CD8-positive, alpha-beta T cell (primary cell): ENCODE measurements at regions of chr11 and their contacts with region 1.

Region 1: DNA sequence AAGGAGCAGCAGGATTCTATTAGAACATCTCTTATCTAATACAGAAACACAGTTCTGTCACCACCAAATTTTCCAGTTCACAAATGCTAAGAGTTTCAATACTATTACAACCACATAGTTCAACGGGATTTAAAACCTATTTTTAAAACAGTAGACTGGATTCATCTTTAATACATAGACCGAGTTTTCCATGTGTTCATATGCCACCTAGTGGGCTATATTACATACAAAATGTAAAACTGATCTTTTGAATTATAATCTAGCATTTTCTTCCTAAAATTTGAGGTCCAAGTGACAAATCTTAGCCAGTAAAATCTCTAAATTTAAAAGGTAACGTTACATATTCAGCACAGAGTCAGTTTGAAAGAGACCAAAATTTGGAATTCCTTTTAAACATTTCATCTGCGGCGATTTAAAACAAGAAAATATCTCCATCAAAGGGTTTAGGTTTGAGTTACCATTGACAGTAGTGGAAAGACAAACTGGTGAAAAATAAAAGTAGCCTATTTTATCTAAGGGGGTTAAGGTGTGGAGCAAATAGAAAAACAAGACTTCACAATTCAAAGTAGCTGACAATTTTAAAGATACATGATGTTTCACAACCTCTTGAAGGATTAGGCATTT is 269.3 kb upstream of the MPPED2 start:
- DNase-seq: no peak
- ATAC-seq: no peak
- H3K4me3 ChIP-seq: no peak overlapping the region
- H3K4me3 Mint-ChIP-seq: no peak overlapping the region
- H3K27ac ChIP-seq: no peak overlapping the region
- H3K27ac Mint-ChIP-seq: no peak overlapping the region
- H3K4me1 ChIP-seq: no peaks in the 10 kb centered on the region
- H3K4me1 Mint-ChIP-seq: no peaks in the 10 kb centered on the region
- H3K27me3 ChIP-seq: no peaks in the 10 kb centered on the region
- H3K27me3 Mint-ChIP-seq: no peaks in the 10 kb centered on the region
- CTCF ChIP-seq: no peak

Region 2: DNA sequence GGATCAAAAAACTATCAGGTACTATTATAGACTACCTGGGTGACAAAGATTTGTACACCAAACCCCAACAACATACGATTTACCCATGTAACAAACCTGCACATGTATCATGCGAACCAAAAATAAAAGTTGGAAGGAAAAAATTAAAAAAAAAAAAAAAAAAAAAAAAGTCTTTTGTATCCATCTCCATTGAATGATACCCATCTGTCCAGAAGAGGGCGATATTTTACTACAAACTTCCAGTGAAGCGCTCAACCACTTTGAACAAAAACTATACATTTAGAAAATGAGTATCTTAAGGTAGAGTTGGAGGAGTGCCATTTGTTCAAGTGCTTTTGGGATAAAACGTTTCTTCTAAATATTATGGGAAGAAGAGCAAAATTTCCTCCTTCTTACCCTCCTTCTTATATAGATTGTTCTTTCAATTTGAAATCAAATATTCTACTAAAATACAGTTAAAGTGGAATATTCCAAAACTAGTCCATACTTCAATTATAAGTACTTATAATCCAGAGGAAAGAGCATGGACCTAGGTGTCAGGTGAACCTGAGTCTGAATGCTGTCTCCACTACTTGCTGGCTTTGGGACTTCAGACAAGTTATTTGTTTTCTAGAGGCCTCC is 509.3 kb before region 1 on chr11:
- CTCF ChIA-PET with region 1: no interaction called
- POLR2A ChIA-PET with region 1: no interaction called
- intact Hi-C with region 1: loop called in 1 of 2 experiments (anchors 10 kb)
- DNase-seq: peak in 2 of 9 experiments; percentile 65 to 75
- ATAC-seq: peak; percentile 58
- H3K4me3 ChIP-seq: no peak overlapping the region
- H3K4me3 Mint-ChIP-seq: no peak overlapping the region
- H3K27ac ChIP-seq: no peak overlapping the region
- H3K27ac Mint-ChIP-seq: no peak overlapping the region
- H3K4me1 ChIP-seq: peaks cover 17% of the 10 kb centered on the region
- H3K4me1 Mint-ChIP-seq: peaks cover 16% of the 10 kb centered on the region
- H3K27me3 ChIP-seq: no peaks in the 10 kb centered on the region
- H3K27me3 Mint-ChIP-seq: no peaks in the 10 kb centered on the region
- CTCF ChIP-seq: peak; percentile 78

Region 3: DNA sequence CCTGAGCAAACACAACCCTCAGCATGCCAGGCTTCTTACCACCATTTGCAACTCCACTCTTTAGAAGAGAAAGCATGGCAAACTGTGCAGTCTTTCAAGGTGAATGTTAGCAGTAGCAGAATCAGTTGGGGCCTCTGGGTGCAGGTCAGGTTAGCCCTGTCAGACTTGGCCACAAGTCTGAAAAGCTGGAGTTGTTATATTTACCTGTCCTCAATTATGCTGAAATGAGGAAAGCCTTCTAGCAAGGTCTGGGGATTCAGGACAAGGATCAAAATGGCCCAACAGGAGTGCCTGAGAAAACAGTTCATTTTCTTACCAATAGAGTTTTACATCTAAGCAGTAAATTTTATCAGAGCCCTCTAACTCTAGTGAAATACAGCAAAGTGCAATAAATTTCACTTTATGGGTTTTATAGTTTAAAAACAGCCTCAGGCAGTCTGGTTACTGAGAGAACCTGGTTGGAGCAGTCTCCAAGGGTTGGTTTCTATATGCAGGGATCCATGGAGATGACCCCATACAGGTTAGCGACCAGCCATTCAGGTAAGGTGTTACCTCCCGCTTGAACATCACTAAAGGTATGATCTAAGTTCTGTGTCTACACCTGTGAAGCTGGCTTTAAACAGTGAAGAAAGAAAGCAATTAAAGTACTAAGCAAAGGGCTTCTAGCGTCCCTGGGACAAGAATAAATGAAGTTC is 56.8 kb before region 1 on chr11:
- CTCF ChIA-PET with region 1: no interaction called
- POLR2A ChIA-PET with region 1: no interaction called
- intact Hi-C with region 1: loop called in 1 of 2 experiments (anchors 10 kb)
- DNase-seq: no peak
- ATAC-seq: no peak
- H3K4me3 ChIP-seq: no peak overlapping the region
- H3K4me3 Mint-ChIP-seq: no peak overlapping the region
- H3K27ac ChIP-seq: no peak overlapping the region
- H3K27ac Mint-ChIP-seq: no peak overlapping the region
- H3K4me1 ChIP-seq: no peaks in the 10 kb centered on the region
- H3K4me1 Mint-ChIP-seq: no peaks in the 10 kb centered on the region
- H3K27me3 ChIP-seq: no peaks in the 10 kb centered on the region
- H3K27me3 Mint-ChIP-seq: peaks cover 2% of the 10 kb centered on the region
- CTCF ChIP-seq: no peak

Region 4: GRCh38 chr11:30936491-30936890 is 81.0 kb after region 1 on chr11:
- CTCF ChIA-PET with region 1: no interaction called
- POLR2A ChIA-PET with region 1: no interaction called
- intact Hi-C with region 1: no loop called
- DNase-seq: no peak
- ATAC-seq: no peak
- H3K4me3 ChIP-seq: no peak overlapping the region
- H3K4me3 Mint-ChIP-seq: no peak overlapping the region
- H3K27ac ChIP-seq: no peak overlapping the region
- H3K27ac Mint-ChIP-seq: no peak overlapping the region
- H3K4me1 ChIP-seq: no peaks in the 10 kb centered on the region
- H3K4me1 Mint-ChIP-seq: no peaks in the 10 kb centered on the region
- H3K27me3 ChIP-seq: no peaks in the 10 kb centered on the region
- H3K27me3 Mint-ChIP-seq: no peaks in the 10 kb centered on the region
- CTCF ChIP-seq: no peak

Region 5: DNA sequence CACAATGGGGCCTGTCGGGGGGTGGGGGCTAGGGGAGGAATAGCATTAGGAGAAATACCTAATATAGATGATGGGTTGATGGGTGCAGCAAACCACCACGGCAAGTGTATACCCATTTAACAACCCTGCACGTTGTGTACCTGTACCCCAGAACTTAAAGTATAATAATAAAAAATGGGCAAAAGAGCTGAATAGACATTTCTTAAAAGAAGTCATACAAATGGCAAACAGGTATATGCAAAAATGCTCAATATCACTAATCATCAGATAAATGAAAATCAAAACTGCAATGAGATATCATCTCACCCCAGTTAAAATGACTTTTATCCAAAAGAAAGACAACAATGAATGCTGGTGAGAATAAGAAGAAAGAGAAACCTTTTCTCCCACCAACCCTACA is 94.3 kb after region 1 on chr11:
- CTCF ChIA-PET with region 1: no interaction called
- POLR2A ChIA-PET with region 1: no interaction called
- intact Hi-C with region 1: no loop called
- DNase-seq: no peak
- ATAC-seq: no peak
- H3K4me3 ChIP-seq: no peak overlapping the region
- H3K4me3 Mint-ChIP-seq: no peak overlapping the region
- H3K27ac ChIP-seq: no peak overlapping the region
- H3K27ac Mint-ChIP-seq: no peak overlapping the region
- H3K4me1 ChIP-seq: no peaks in the 10 kb centered on the region
- H3K4me1 Mint-ChIP-seq: no peaks in the 10 kb centered on the region
- H3K27me3 ChIP-seq: no peaks in the 10 kb centered on the region
- H3K27me3 Mint-ChIP-seq: no peaks in the 10 kb centered on the region
- CTCF ChIP-seq: no peak